ENCODE measurements at regions of chr5 and their contacts with region 1.

Region 1: GRCh38 chr5:112419986-112420864 is 1.1 kb upstream of the EPB41L4A start:
- DNase-seq: peak; percentile 88
- H3K4me3 ChIP-seq: peak overlapping the region; percentile 80 to 97 (median 91)
- H3K27ac ChIP-seq: no peak overlapping the region
- H3K4me1 ChIP-seq: peaks cover 7% of the 10 kb centered on the region
- H3K27me3 ChIP-seq: no peaks in the 10 kb centered on the region
- CTCF ChIP-seq: peak; percentile 92 to 93
- POLR2A ChIP-seq: peak; percentile 10

Region 2: GRCh38 chr5:112165897-112166806 is 254.1 kb before region 1 on chr5:
- CTCF ChIA-PET with region 1: interaction called, 52 read pairs
- POLR2A ChIA-PET with region 1: interaction called, 8 read pairs
- dilution Hi-C with region 1: no loop called
- intact Hi-C with region 1: no loop called
- DNase-seq: no peak
- H3K4me3 ChIP-seq: no peak overlapping the region
- H3K27ac ChIP-seq: no peak overlapping the region
- H3K4me1 ChIP-seq: peaks cover 17% of the 10 kb centered on the region
- H3K27me3 ChIP-seq: no peaks in the 10 kb centered on the region
- CTCF ChIP-seq: no peak
- POLR2A ChIP-seq: peak; percentile 11

Region 3: DNA sequence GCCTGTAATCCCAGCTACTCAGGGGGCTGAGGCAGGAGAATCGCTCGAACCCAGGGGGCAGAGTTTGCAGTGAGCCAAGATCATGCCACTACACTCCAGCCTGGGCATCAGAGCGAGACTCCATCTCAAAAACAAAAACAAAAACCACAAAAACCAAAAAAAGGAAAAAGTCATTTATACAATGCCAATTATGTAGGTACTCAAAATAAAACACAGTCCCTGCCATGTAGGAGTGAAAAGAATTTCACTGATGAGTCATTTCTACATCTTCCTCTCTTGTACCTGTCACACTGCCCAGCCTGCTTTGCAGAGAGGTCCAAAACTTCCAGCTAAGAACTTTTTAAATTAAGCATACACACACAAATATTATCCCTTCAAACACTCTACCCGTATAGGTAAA is 217.0 kb before region 1 on chr5:
- CTCF ChIA-PET with region 1: interaction called, 102 read pairs
- POLR2A ChIA-PET with region 1: interaction called, 3 read pairs
- dilution Hi-C with region 1: no loop called
- intact Hi-C with region 1: no loop called
- DNase-seq: no peak
- H3K4me3 ChIP-seq: no peak overlapping the region
- H3K27ac ChIP-seq: no peak overlapping the region
- H3K4me1 ChIP-seq: no peaks in the 10 kb centered on the region
- H3K27me3 ChIP-seq: no peaks in the 10 kb centered on the region
- CTCF ChIP-seq: no peak
- POLR2A ChIP-seq: no peak

Region 4: DNA sequence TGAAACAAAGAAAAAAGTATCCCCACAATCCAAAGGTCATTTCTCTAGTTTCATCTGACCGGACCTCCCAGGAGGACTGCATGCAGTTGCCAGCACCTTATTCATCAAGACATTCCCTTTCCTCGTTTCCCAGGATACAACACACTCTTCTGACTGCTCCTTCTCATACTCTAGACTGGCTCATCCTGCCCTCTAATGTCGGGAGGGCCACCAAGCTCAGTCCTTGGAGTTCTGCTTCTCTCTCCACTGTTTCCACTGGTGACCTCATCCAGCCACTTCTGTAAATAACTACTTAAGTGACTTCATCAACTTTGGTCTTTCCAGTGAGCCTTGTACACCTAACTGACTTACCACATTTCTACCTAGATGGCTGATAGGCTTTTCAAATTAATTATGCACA is 180.2 kb before region 1 on chr5:
- CTCF ChIA-PET with region 1: interaction called, 13 read pairs
- POLR2A ChIA-PET with region 1: no interaction called
- dilution Hi-C with region 1: no loop called
- intact Hi-C with region 1: no loop called
- DNase-seq: no peak
- H3K4me3 ChIP-seq: no peak overlapping the region
- H3K27ac ChIP-seq: no peak overlapping the region
- H3K4me1 ChIP-seq: no peaks in the 10 kb centered on the region
- H3K27me3 ChIP-seq: no peaks in the 10 kb centered on the region
- CTCF ChIP-seq: no peak
- POLR2A ChIP-seq: no peak

Region 5: DNA sequence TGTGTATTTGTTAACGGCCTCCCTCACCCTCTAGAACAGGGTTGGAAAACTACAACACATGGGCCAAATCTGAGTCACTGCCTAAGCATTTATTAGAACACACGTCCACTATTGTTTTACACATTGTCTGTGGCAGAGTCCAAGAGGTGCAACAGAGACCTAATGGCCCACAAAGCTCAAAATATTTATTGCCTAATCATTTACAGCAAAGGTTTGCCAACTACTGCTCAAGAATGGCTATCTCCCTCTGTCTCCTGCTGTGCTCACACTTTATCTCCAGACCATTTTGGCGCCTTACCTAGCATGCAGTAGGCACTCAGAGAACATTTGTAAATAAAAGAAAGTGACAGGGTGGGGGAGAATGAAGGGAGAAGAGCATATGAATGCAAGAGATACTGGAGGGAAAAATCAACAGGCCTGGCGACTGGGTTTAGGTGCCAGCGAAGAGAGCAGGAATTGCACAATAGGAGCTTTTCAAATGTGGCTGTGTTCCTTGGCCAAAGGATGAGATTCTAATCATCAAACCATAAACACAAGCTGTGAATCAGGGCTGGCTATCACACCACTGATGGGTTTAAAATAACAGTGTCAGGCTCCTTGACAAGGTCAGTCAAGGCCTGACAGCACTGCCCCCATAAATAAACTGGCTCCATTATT is 81.4 kb before region 1 on chr5:
- CTCF ChIA-PET with region 1: interaction called, 18 read pairs
- POLR2A ChIA-PET with region 1: no interaction called
- dilution Hi-C with region 1: no loop called
- intact Hi-C with region 1: loop called (anchors 2 kb)
- DNase-seq: peak; percentile 91
- H3K4me3 ChIP-seq: no peak overlapping the region
- H3K27ac ChIP-seq: peak overlapping the region; percentile 90
- H3K4me1 ChIP-seq: peaks cover 22% of the 10 kb centered on the region
- H3K27me3 ChIP-seq: no peaks in the 10 kb centered on the region
- CTCF ChIP-seq: no peak
- POLR2A ChIP-seq: no peak

Region 6: DNA sequence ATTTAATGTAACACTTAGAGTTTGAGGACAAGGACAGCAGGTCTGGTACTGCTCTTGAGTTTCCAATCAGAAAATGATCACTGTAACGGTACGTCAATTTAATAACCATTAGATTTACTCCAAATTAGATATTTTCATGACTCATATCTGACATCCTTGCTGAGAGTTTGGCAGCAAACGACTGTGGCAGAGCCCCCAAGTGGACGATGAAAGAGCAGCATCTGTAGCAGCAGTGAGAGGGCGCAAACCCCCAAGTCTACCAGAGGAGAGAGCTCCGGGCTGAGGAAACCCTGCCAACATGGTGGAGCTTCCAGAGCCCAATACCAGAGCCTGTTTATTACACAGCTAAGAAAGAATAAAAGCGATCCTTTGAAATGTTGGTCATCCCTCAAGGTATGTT is 72.1 kb after region 1 on chr5:
- CTCF ChIA-PET with region 1: interaction called, 53 read pairs
- POLR2A ChIA-PET with region 1: interaction called, 4 read pairs
- dilution Hi-C with region 1: no loop called
- intact Hi-C with region 1: loop called (anchors 1 kb)
- DNase-seq: peak; percentile 92
- H3K4me3 ChIP-seq: no peak overlapping the region
- H3K27ac ChIP-seq: no peak overlapping the region
- H3K4me1 ChIP-seq: no peaks in the 10 kb centered on the region
- H3K27me3 ChIP-seq: peaks cover 0 to 4% of the 10 kb centered on the region in 2 experiments
- CTCF ChIP-seq: peak; percentile 77 to 84
- POLR2A ChIP-seq: no peak

Region 7: DNA sequence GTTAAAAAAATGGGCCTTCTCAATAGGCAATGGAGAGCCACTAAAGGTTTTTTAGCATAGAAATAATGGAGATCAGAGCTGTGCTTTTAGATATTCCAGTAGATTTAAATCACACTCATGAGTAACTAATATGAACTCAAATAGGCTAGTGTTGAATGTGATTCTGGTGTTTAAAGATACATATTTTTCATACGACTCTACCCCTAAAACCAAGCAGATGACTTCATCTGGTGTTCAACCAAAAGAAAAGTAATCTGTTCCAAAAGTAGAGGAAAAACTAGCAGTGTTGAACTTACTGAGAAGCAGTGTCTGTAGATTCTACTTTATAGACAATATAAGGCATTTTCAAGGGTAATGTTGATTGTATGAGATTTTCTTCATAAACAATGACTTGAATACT is 876.5 kb after region 1 on chr5:
- CTCF ChIA-PET with region 1: no interaction called
- POLR2A ChIA-PET with region 1: no interaction called
- dilution Hi-C with region 1: no loop called
- intact Hi-C with region 1: no loop called
- DNase-seq: no peak
- H3K4me3 ChIP-seq: no peak overlapping the region
- H3K27ac ChIP-seq: no peak overlapping the region
- H3K4me1 ChIP-seq: peaks cover 19% of the 10 kb centered on the region
- H3K27me3 ChIP-seq: no peaks in the 10 kb centered on the region
- CTCF ChIP-seq: no peak
- POLR2A ChIP-seq: no peak

Measured in endothelial cell of umbilical vein (primary cell).